HEK293 (cell line): ENCODE measurements at regions of chr9 and their contacts with region 1.

Region 1: DNA sequence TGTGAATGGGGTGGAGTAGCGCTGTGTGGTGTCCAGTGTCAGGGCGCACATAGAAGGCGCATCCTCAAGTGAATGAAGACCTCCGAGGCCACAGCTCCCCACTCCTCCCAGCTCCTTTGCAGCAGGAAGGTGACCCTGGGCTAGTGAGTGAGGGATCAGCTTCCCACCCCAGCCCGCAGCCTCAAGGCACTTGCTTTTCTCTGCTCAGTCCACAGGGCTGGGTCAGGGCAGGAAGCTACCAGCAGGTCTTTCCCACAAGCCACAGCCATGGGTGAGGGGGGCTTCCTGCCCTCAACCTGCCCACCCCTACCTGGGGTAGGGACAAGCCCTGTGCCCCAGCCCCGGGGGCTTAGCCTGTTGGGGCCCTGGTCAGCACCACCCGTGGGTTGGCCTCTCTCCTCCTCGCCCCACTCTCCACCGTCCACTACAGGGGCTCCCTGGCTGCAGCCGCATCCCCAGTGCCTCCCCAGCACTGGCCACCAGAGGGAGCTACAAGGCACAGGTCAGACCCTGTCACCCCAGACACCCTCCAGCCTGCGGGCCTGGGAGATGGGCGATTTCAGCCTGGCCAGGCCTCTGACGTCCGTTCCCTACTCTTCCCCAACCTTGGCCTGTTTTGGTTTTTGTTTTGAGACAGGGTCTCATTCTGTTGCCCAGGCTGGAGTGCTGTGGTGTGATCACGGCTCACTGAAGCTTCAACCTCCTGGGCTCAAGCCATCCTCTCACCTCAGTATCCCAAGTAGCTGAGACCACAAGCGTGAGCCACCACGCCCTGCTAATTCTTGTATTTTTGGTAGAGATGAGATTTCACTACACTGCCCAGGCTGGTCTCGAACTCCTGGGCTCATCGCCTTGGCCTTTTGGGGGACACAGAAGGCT is 1.3 kb upstream of the ABCA2 start:
- H3K4me3 ChIP-seq: no peak overlapping the region
- H3K27ac ChIP-seq: no peak overlapping the region
- H3K4me1 ChIP-seq: peaks cover 2% of the 10 kb centered on the region; the same call in 1 of the 2 replicates
- CTCF ChIP-seq: peak; percentile 94

Region 2: DNA sequence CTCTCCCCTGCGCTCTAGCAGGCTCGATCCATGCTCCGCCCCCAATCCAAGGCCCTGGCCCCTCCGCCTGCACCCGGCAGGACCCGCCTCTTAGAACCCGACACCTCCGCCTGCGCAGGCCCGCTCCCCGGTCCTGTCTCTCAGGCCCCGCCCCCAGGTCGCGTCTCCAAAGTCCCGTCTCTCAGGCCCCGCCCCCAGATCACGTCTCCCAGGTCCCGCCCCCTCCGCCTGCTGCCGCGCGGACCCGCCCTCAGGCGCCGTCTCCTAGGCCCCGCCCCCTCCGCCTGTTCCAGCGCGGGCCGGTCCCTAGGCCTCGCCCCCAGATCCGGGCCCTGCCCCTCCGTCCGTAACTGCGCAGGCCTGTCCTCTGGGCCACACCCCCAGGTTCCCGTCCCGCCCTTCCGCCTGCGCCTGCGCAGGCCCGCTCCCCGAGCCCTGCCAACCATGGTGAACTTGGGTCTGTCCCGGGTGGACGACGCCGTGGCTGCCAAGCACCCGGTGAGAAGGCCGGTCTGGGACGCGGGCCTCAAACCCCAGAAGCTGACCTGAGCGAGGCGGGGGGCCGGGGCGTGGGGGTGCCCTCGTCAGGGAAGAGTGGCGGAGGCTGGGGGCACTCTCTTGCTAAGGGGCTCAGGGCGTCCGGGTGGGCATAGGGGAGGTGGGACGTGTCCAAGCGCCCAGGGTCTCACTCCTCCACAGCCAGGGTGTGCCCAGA is 238.2 kb before region 1 on chr9 and contains the start of gene TMEM141:
- CTCF ChIA-PET with region 1: interaction called, 61 read pairs
- POLR2A ChIA-PET with region 1: interaction called, 8 read pairs
- H3K4me3 ChIP-seq: peak within 1 kb of the TSS; percentile 47
- H3K27ac ChIP-seq: peak within 1 kb of the TSS; percentile 74
- H3K4me1 ChIP-seq: peaks cover 7% of the 10 kb centered on the region
- CTCF ChIP-seq: no peak

Region 3: GRCh38 chr9:136949817-136950655 is 79.3 kb before region 1 on chr9:
- CTCF ChIA-PET with region 1: interaction called, 119 read pairs
- POLR2A ChIA-PET with region 1: interaction called, 16 read pairs
- H3K4me3 ChIP-seq: peak overlapping the region; percentile 55
- H3K27ac ChIP-seq: peak overlapping the region; percentile 76
- H3K4me1 ChIP-seq: no peaks in the 10 kb centered on the region; the same call in 1 of the 2 replicates
- CTCF ChIP-seq: peak; percentile 86

Region 4: GRCh38 chr9:136991993-136992818 is 37.1 kb before region 1 on chr9 and contains the start of gene PAXX:
- CTCF ChIA-PET with region 1: interaction called, 38 read pairs
- POLR2A ChIA-PET with region 1: interaction called, 8 read pairs
- H3K4me3 ChIP-seq: peak within 1 kb of the TSS; percentile 72
- H3K27ac ChIP-seq: peak within 1 kb of the TSS; percentile 83
- H3K4me1 ChIP-seq: peaks cover 5% of the 10 kb centered on the region
- CTCF ChIP-seq: peak; percentile 33; the same call in 1 of the 2 replicates

Region 5: DNA sequence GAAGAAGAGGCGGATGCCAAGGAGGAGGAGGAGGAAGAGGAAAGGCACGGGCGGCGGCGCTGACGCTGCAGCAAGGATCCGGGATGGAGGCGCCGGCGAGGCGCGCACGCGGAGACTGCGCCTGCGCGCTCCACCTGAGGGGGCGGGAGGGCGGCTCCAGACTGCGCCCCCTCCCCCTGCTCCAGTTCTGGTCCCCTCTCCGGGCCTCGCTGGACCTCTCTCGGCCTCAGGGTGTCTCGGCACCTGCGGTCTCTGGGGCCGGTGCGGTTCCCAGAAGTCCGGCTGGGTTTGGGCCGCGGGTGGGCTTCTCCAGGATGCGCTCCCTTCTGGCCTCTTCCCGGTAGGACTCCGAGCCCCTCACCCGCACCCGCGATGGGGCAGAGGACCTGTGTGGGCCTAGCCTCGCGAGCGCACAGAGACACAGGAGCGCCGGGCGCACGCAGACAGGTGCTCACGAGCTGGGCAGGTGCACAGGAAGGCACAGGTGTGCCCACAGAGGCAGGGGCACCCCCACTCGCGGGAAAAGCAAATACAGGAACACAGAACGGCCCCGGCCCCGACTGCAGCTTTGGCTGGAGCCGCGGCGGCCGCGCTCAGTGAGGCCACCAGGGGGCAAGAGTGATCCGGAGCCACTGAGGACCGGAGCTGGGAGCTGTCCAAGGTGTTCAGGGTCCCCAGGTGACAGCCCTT is 16.9 kb after region 1 on chr9 and contains the start of gene NPDC1:
- CTCF ChIA-PET with region 1: interaction called, 47 read pairs
- POLR2A ChIA-PET with region 1: interaction called, 6 read pairs
- H3K4me3 ChIP-seq: peak within 1 kb of the TSS; percentile 58
- H3K27ac ChIP-seq: peak within 1 kb of the TSS; percentile 79; the same call in 1 of the 2 replicates
- H3K4me1 ChIP-seq: peaks cover 5% of the 10 kb centered on the region; the same call in 1 of the 2 replicates
- CTCF ChIP-seq: peak; percentile 87

Region 6: DNA sequence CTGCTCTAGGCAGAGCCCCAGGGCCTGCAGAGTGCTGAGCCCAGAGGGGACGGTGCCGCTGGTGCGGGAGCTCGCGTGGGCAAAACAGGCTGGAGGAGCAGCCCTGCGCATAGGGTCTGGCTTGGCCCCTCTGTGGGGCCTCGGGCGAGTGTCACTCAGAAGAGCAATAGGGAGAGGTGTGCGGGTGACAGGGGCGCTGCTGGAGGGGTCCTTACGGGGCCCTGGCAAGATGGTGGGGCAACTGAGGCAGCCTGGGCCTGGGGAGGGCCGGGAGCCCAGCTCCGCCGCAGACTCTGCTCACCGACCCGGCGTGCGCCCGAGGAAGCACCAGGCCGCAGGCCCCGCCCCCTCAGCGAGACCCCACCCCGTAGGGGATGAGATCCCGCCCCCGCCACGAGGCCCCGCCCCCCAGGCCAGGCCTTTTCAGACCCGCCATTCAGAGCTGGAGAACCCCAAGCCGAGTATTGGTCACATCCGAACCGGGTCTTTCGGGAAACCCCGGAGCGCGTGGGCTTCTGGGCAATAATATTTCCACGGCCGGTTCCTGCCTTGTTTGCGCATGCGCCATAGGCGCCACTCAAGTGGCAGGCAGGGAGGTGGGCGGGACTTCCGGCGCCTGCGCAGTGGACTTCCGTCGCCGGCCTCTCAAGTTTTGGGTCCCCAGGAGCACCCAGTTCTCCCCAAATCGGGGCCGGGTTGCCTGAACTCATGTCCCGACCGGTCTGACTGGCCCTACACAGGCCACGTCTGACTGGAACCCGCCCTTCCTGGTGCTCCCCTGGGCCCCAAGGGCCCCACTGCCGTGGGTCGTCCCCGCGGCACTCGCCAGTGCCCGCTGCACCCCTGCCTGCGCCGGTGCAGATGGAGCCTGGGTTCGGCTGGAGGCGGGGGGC is 194.0 kb after region 1 on chr9:
- CTCF ChIA-PET with region 1: interaction called, 11 read pairs
- POLR2A ChIA-PET with region 1: interaction called, 5 read pairs
- H3K4me3 ChIP-seq: peak overlapping the region; percentile 89
- H3K27ac ChIP-seq: peak overlapping the region; percentile 83
- H3K4me1 ChIP-seq: peaks cover 4% of the 10 kb centered on the region
- CTCF ChIP-seq: no peak